IMR-90 (cell line): ENCODE measurements at regions of chr18 and their contacts with region 1.

Region 1: GRCh38 chr18:20971886-20972267 is 139.7 kb downstream of the ROCK1 start:
- DNase-seq: peak; percentile 19
- ATAC-seq: peak; percentile 71
- H3K4me3 ChIP-seq: no peak overlapping the region
- H3K27ac ChIP-seq: no peak overlapping the region
- H3K4me1 ChIP-seq: no peaks in the 10 kb centered on the region
- H3K27me3 ChIP-seq: no peaks in the 10 kb centered on the region
- CTCF ChIP-seq: peak; percentile 50
- POLR2A ChIP-seq: no peak
- RAD21 ChIP-seq: peak; percentile 50

Region 2: DNA sequence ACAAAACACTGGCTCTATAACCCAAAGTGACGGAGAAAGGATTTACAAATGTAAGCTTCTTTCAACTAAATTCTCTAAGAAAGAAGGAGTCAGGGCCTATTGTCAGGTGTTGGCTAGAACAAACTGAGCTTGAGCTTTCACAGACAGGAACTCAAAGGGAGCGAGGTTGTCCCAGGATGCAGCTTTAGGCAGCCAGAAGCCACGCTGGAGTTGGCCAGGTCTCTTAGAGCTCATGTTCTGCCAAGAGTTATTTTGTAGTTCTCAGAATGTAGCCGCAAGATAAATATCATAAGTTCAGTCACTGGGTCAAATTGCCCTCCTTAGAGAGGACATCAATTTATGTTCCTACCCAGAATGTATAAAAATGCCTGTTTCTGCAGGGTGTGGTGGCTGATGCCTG is 216.0 kb after region 1 on chr18:
- CTCF ChIA-PET with region 1: interaction called, 5 read pairs
- POLR2A ChIA-PET with region 1: no interaction called
- dilution Hi-C with region 1: no loop called
- in situ Hi-C with region 1: no loop called
- intact Hi-C with region 1: loop called (anchors 2 kb)
- DNase-seq: no peak
- ATAC-seq: no peak
- H3K4me3 ChIP-seq: no peak overlapping the region
- H3K27ac ChIP-seq: no peak overlapping the region
- H3K4me1 ChIP-seq: no peaks in the 10 kb centered on the region
- H3K27me3 ChIP-seq: peaks cover 10% of the 10 kb centered on the region; the same call in 1 of the 2 replicates
- CTCF ChIP-seq: no peak
- POLR2A ChIP-seq: no peak
- RAD21 ChIP-seq: no peak